ENCODE measurements at regions of chr22 and their contacts with region 1.

Region 1: DNA sequence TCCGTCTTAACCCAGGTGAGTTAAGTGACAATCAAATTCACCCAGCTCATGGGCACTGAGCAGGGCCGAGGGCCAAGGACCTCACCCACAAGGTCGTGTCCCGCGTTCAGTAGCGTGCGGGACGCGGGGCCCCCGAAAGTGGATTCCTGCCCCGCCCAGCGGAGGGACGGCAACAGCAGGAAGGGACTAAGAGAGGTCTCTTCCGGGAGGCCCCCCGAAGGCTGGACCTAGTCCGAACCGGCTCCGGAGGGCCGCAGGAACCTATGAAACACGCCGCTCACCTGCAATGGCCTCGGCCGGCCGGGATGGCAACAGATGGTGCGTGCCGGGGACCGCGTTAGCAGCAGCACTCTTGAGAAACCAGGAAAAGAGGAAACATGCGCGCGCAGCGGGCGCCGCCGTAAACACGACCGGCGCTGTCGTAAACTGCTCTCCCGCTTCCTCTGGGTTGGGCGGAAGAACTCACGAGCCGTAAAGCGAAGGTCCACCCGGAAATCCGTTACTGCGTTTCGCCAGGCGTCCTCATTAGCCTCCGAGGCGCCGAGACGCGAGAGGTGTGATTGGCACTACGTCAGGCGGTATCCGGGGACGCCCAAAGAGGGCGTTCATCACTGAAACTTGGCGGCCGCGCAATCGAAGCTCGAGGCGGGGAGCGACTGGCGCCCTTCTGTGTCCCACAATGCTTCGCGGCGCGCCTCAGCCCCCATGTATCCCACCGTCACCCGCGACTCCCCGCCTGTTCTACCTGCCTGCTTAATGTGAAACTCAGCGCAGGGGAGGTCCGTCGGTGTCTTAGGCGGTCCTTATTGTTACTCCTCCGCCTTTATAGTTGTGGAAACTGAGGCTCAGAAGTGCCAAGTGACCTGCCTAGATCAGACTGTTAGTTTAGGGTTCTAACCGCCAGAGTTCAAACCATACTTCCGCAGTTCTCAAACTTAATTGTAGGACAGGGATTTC is at the start of gene EIF3D:
- DNase-seq: peak; percentile 99
- ATAC-seq: peak; percentile 96
- H3K4me3 Mint-ChIP-seq: peak within 1 kb of the TSS; percentile 82
- H3K27ac Mint-ChIP-seq: peak within 1 kb of the TSS; percentile 99
- H3K4me1 Mint-ChIP-seq: peaks cover 25% of the 10 kb centered on the region
- H3K27me3 Mint-ChIP-seq: no peaks in the 10 kb centered on the region
- total RNA-seq, gene EIF3D: 359 to 403 TPM

Region 2: DNA sequence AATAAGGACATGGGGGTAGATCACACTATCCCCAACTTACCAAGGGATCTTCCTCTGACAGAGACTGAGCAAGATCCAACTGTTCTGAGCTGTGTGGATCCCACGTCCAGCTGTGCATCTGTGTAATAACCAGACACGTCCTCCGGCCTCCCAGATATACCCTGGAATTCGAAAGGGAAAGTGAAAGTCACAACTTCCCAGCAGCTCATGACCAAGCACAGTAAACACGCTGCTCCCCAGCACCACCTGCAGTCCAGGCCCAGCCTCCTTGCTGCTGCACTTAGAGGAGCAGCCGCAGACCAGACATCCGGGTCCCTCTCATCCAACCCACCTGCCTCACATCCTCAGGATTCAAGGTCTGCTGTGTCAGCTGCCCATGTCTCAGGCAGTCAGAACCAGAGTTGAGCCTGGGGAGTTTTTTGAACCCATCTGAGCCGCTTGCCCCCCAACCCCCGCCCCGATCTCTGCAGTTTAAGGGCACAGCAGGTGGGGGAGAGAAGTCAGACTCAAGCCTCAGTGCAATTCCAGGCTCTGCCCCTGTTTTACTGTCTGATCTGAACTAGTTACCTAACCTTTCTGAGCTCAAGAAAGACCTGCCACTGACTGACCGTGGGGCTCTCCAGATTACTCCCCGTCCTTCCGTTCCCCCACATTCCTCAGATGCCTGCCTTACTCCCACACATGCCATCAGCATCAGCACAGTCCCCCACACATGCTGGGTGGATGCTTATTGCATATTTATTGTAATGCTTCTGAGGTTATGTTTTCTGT is 289.5 kb before region 1 on chr22 and contains the start of gene APOL2:
- CTCF ChIA-PET with region 1: no interaction called
- POLR2A ChIA-PET with region 1: interaction called, 5 read pairs
- intact Hi-C with region 1: loop called in 1 of 2 experiments (anchors 1 kb)
- DNase-seq: peak; percentile 93
- ATAC-seq: peak; percentile 96
- H3K4me3 Mint-ChIP-seq: peak within 1 kb of the TSS; percentile 98
- H3K27ac Mint-ChIP-seq: peak within 1 kb of the TSS; percentile 99
- H3K4me1 Mint-ChIP-seq: peaks cover 42% of the 10 kb centered on the region
- H3K27me3 Mint-ChIP-seq: no peaks in the 10 kb centered on the region
- total RNA-seq, gene APOL2: 64.5 TPM

Region 3: GRCh38 chr22:36445158-36445668 is 83.9 kb before region 1 on chr22:
- CTCF ChIA-PET with region 1: no interaction called
- POLR2A ChIA-PET with region 1: interaction called, 10 read pairs
- intact Hi-C with region 1: no loop called
- DNase-seq: no peak
- ATAC-seq: no peak
- H3K4me3 Mint-ChIP-seq: no peak overlapping the region
- H3K27ac Mint-ChIP-seq: no peak overlapping the region
- H3K4me1 Mint-ChIP-seq: peaks cover 16% of the 10 kb centered on the region
- H3K27me3 Mint-ChIP-seq: no peaks in the 10 kb centered on the region

Region 4: DNA sequence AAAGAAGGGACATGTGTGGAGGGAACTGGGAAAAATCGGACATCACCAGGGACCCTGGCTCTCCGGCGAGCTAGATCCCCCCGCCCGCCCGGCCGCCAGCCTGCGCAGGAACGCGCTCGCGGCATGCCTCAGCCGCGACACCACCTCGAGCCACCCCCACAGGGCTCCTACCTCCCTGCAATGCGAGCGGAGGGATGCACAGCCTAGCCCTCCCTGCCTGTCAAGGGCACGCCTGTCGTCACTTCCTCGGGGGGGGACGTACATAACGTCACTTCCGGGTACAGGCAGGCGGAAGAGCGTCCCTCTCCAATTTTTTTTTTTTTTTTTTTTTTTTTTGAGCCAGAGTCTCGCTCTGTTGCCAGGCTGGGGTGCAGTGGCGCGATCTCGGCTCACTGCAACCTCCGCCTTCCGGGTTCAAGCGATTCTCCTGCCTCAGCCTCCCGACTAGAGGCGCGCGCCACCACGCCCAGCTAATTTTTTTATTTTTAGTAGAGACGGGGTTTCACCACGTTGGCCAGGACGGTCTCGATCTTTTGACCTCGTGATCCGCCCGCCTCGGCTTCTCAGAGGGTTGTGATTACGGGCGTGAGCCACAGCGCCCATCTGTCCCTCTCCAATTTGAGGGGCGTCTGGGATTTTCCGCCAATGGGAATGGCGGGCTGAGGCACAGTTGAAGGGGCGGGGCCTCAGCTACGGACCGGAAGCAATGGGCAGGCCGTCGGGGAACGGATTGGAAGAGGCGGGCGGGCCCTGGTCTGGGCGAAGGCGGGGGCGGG is 47.5 kb before region 1 on chr22 and contains the start of gene TXN2:
- CTCF ChIA-PET with region 1: interaction called, 4 read pairs
- POLR2A ChIA-PET with region 1: interaction called, 5 read pairs
- intact Hi-C with region 1: loop called (anchors 1 to 2 kb)
- DNase-seq: peak; percentile 97
- ATAC-seq: peak; percentile 89
- H3K4me3 Mint-ChIP-seq: peak within 1 kb of the TSS; percentile 81
- H3K27ac Mint-ChIP-seq: peak within 1 kb of the TSS; percentile 94
- H3K4me1 Mint-ChIP-seq: peaks cover 19% of the 10 kb centered on the region
- H3K27me3 Mint-ChIP-seq: no peaks in the 10 kb centered on the region
- total RNA-seq, gene TXN2: 95.5 to 99.1 TPM

Region 5: GRCh38 chr22:36546092-36546804 is 17.2 kb after region 1 on chr22:
- CTCF ChIA-PET with region 1: interaction called, 6 read pairs
- POLR2A ChIA-PET with region 1: interaction called, 4 read pairs
- intact Hi-C with region 1: loop called in 1 of 2 experiments (anchors 1 kb)
- DNase-seq: peak; percentile 72
- ATAC-seq: peak; percentile 59
- H3K4me3 Mint-ChIP-seq: no peak overlapping the region
- H3K27ac Mint-ChIP-seq: no peak overlapping the region
- H3K4me1 Mint-ChIP-seq: peaks cover 8% of the 10 kb centered on the region
- H3K27me3 Mint-ChIP-seq: peaks cover 8% of the 10 kb centered on the region

Region 6: GRCh38 chr22:36977947-36978660 is 449.0 kb after region 1 on chr22:
- CTCF ChIA-PET with region 1: no interaction called
- POLR2A ChIA-PET with region 1: no interaction called
- intact Hi-C with region 1: loop called in 1 of 2 experiments (anchors 1 kb)
- DNase-seq: peak; percentile 95
- ATAC-seq: peak; percentile 86
- H3K4me3 Mint-ChIP-seq: peak overlapping the region; percentile 76
- H3K27ac Mint-ChIP-seq: peak overlapping the region; percentile 77
- H3K4me1 Mint-ChIP-seq: peaks cover 8% of the 10 kb centered on the region
- H3K27me3 Mint-ChIP-seq: no peaks in the 10 kb centered on the region